Caco-2 (cell line): ENCODE measurements at regions of chr20 and their contacts with region 1.

Region 1: DNA sequence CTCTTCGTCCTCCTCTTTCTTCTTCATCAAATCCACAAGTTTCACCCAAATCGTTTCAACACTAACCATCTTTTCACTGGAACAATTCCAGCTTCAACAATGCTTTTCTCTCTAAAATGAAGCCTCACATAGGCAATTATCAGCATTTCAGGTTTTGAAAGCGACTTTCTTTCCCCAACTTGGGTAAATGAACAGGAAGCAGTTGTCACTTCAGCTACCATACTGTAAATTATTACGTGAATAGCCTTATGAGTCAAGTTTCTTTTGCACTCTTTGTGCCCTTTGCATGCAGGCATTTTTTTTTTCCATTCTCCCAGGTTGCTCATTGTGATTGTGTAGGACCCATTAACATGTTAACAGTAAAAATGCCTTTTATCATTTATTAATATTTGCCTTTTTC is 121.7 kb upstream of the BTBD3 start:
- DNase-seq: no peak
- H3K4me3 ChIP-seq: no peak overlapping the region
- H3K4me3 Mint-ChIP-seq: no peak overlapping the region
- H3K27ac Mint-ChIP-seq: no peak overlapping the region
- H3K4me1 ChIP-seq: peaks cover 37% of the 10 kb centered on the region
- H3K4me1 Mint-ChIP-seq: peaks cover 21% of the 10 kb centered on the region
- H3K27me3 ChIP-seq: no peaks in the 10 kb centered on the region
- H3K27me3 Mint-ChIP-seq: no peaks in the 10 kb centered on the region
- CTCF ChIP-seq: no peak

Region 2: GRCh38 chr20:11686820-11687543 is 109.0 kb before region 1 on chr20:
- CTCF ChIA-PET with region 1: no interaction called
- POLR2A ChIA-PET with region 1: no interaction called
- intact Hi-C with region 1: loop called (anchors 10 kb)
- DNase-seq: peak in 1 of 2 experiments; percentile 14
- H3K4me3 ChIP-seq: peak overlapping the region; percentile 5; the same call in 1 of the 2 replicates
- H3K4me3 Mint-ChIP-seq: peak overlapping the region; percentile 70
- H3K27ac Mint-ChIP-seq: no peak overlapping the region
- H3K4me1 ChIP-seq: peaks cover 19% of the 10 kb centered on the region
- H3K4me1 Mint-ChIP-seq: peaks cover 19% of the 10 kb centered on the region
- H3K27me3 ChIP-seq: no peaks in the 10 kb centered on the region
- H3K27me3 Mint-ChIP-seq: peaks cover 3% of the 10 kb centered on the region
- CTCF ChIP-seq: no peak

Region 3: GRCh38 chr20:11755071-11755841 is 40.8 kb before region 1 on chr20:
- CTCF ChIA-PET with region 1: no interaction called
- POLR2A ChIA-PET with region 1: no interaction called
- intact Hi-C with region 1: no loop called
- DNase-seq: no peak
- H3K4me3 ChIP-seq: no peak overlapping the region
- H3K4me3 Mint-ChIP-seq: no peak overlapping the region
- H3K27ac Mint-ChIP-seq: no peak overlapping the region
- H3K4me1 ChIP-seq: peaks cover 3% of the 10 kb centered on the region; the same call in 1 of the 2 replicates
- H3K4me1 Mint-ChIP-seq: no peaks in the 10 kb centered on the region
- H3K27me3 ChIP-seq: no peaks in the 10 kb centered on the region
- H3K27me3 Mint-ChIP-seq: no peaks in the 10 kb centered on the region
- CTCF ChIP-seq: no peak

Region 4: GRCh38 chr20:11822540-11822794 is 26.4 kb after region 1 on chr20:
- CTCF ChIA-PET with region 1: interaction called, 4 read pairs
- POLR2A ChIA-PET with region 1: no interaction called
- intact Hi-C with region 1: loop called (anchors 1 kb)
- DNase-seq: no peak
- H3K4me3 ChIP-seq: no peak overlapping the region
- H3K4me3 Mint-ChIP-seq: peak overlapping the region; percentile 25
- H3K27ac Mint-ChIP-seq: peak overlapping the region; percentile 91
- H3K4me1 ChIP-seq: peaks cover 41% of the 10 kb centered on the region
- H3K4me1 Mint-ChIP-seq: peaks cover 15% of the 10 kb centered on the region
- H3K27me3 ChIP-seq: no peaks in the 10 kb centered on the region
- H3K27me3 Mint-ChIP-seq: no peaks in the 10 kb centered on the region
- CTCF ChIP-seq: no peak